Activated CD4-positive, alpha-beta memory T cell treated with anti-CD3 and anti-CD28 coated beads for 36 hours (primary cell): ENCODE measurements at regions of chr5 and their contacts with region 1.

Region 1: GRCh38 chr5:132293066-132293991 is 865 bp upstream of the SLC22A4 start:
- DNase-seq: peak; percentile 87
- H3K4me3 Mint-ChIP-seq: peak overlapping the region; percentile 90
- H3K27ac Mint-ChIP-seq: peak overlapping the region; percentile 82
- H3K4me1 Mint-ChIP-seq: peaks cover 21% of the 10 kb centered on the region
- H3K27me3 Mint-ChIP-seq: peaks cover 10% of the 10 kb centered on the region

Region 2: DNA sequence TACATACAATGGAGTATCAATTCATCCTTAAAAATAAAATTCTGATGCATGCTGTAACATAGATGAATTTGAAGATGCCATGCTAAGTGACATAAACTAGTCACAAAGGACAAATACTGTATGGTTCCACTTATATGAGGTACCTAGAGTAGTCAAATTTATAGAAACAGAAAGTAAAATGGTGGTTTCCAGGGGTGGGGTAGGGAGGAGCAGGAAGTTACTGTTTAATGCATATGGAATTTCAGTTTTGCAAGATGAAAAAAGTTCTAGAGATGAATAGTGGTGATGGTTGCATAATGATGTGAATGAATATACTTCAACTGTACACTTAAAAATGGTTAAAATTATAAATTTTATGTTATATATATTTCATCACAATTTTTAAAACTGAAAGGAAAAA is 439.2 kb before region 1 on chr5:
- CTCF ChIA-PET with region 1: no interaction called
- POLR2A ChIA-PET with region 1: no interaction called
- intact Hi-C with region 1: no loop called
- DNase-seq: no peak
- H3K4me3 Mint-ChIP-seq: no peak overlapping the region
- H3K27ac Mint-ChIP-seq: no peak overlapping the region
- H3K4me1 Mint-ChIP-seq: peaks cover 16% of the 10 kb centered on the region
- H3K27me3 Mint-ChIP-seq: no peaks in the 10 kb centered on the region

Region 3: GRCh38 chr5:132260714-132261551 is 32.4 kb before region 1 on chr5:
- CTCF ChIA-PET with region 1: interaction called, 3 read pairs
- POLR2A ChIA-PET with region 1: interaction called, 4 read pairs
- intact Hi-C with region 1: loop called (anchors 1 kb)
- DNase-seq: peak; percentile 57
- H3K4me3 Mint-ChIP-seq: no peak overlapping the region
- H3K27ac Mint-ChIP-seq: no peak overlapping the region
- H3K4me1 Mint-ChIP-seq: peaks cover 15% of the 10 kb centered on the region
- H3K27me3 Mint-ChIP-seq: peaks cover 13% of the 10 kb centered on the region

Region 4: GRCh38 chr5:132272311-132273210 is 20.8 kb before region 1 on chr5:
- CTCF ChIA-PET with region 1: interaction called, 12 read pairs
- POLR2A ChIA-PET with region 1: interaction called, 3 read pairs
- intact Hi-C with region 1: loop called (anchors 1 kb)
- DNase-seq: peak; percentile 81
- H3K4me3 Mint-ChIP-seq: no peak overlapping the region
- H3K27ac Mint-ChIP-seq: no peak overlapping the region
- H3K4me1 Mint-ChIP-seq: peaks cover 8% of the 10 kb centered on the region
- H3K27me3 Mint-ChIP-seq: peaks cover 12% of the 10 kb centered on the region

Region 5: GRCh38 chr5:132369474-132370180 is 76.3 kb after region 1 on chr5 and contains the start of gene SLC22A5:
- CTCF ChIA-PET with region 1: no interaction called
- POLR2A ChIA-PET with region 1: interaction called, 18 read pairs
- intact Hi-C with region 1: loop called (anchors 2 kb)
- DNase-seq: peak; percentile 79
- H3K4me3 Mint-ChIP-seq: peak within 1 kb of the TSS; percentile 76
- H3K27ac Mint-ChIP-seq: peak within 1 kb of the TSS; percentile 42
- H3K4me1 Mint-ChIP-seq: peaks cover 24% of the 10 kb centered on the region
- H3K27me3 Mint-ChIP-seq: no peaks in the 10 kb centered on the region
- total RNA-seq, gene SLC22A5: 2.8 to 3.6 TPM

Region 6: DNA sequence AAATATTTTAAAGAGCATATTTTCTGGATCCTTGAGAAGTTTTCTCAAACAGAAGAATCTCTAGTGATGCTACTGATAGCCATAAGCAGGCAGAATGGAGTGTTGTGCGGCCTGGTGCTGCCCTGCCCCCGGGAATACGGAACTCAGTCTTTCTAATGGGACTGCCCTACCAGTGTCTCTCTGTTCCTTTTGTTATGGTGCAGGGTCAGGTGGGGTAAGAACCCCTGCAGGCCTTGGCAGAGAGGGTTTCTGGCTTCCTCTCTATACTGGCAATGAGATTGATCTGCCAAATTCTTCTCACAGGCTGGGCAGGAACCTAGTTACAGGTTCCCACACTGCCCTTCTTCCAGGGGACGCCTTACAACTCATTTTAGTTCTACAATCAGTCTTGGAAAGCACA is 247.4 kb after region 1 on chr5:
- CTCF ChIA-PET with region 1: no interaction called
- POLR2A ChIA-PET with region 1: no interaction called
- intact Hi-C with region 1: no loop called
- DNase-seq: no peak
- H3K4me3 Mint-ChIP-seq: no peak overlapping the region
- H3K27ac Mint-ChIP-seq: no peak overlapping the region
- H3K4me1 Mint-ChIP-seq: peaks cover 11% of the 10 kb centered on the region
- H3K27me3 Mint-ChIP-seq: peaks cover 9% of the 10 kb centered on the region

Region 7: DNA sequence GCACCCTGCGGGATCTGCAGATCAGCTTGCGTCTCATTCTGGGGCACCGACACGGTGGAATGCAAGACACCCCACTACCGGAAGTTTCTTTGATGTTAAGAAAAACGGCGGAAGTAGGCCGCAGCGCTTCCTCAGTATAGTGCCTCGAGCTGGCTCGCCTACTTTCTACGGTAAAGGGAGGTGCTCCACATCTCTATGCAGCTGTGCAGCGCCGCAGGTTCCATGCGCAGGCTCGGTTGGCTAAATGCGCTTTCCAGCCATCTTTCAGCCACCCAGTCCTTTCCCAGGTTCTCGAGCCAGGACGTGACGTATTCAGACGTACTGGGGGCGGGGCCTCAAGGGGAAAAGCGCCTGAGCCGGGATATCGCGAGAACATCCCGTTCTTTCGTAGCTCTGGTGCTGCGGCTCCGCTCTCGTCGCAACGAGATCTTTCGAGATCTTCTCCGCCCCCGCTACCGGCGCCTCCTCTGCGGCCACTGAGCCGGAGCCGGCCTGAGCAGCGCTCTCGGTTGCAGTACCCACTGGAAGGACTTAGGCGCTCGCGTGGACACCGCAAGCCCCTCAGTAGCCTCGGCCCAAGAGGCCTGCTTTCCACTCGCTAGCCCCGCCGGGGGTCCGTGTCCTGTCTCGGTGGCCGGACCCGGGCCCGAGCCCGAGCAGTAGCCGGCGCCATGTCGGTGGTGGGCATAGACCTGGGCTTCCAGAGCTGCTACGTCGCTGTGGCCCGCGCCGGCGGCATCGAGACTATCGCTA is 758.4 kb after region 1 on chr5 and contains the start of gene HSPA4:
- CTCF ChIA-PET with region 1: no interaction called
- POLR2A ChIA-PET with region 1: no interaction called
- intact Hi-C with region 1: loop called (anchors 10 kb)
- DNase-seq: peak; percentile 99
- H3K4me3 Mint-ChIP-seq: peak within 1 kb of the TSS; percentile 89
- H3K27ac Mint-ChIP-seq: peak within 1 kb of the TSS; percentile 96
- H3K4me1 Mint-ChIP-seq: peaks cover 39% of the 10 kb centered on the region
- H3K27me3 Mint-ChIP-seq: no peaks in the 10 kb centered on the region
- total RNA-seq, gene HSPA4: 221 to 236 TPM